Left ventricle myocardium inferior (tissue), 1 donor: ENCODE measurements at regions of chr1 and their contacts with region 1.

Region 1: DNA sequence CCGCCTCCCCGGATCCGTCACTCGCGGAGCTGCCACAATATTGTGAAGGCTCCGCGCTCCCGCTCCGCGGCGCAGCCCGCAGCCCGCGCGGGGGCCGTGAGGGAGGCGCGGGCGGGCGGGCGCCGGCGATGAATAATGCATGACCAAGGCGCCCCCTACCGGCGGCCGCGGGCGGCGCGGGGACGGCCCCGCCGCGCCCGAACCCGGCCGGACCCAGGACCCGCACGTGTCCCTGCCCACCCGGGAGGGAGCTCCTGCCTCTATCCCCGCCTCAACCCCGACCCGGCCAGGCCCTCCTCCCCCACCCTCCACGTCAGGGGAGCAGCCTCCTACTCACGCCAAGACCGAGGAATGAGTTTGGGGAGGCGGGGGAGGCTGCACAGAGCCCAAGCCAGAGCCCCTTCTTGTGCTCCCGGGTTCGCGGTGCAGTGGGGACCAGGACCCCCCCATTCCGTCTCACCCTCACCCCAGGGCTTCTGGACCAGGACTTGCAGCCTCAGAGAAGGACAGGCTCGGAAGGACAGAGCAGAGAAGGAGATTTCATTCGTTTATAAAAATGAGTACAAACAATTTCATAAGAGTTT is 70.8 kb upstream of the CASZ1 start:
- DNase-seq: peak; percentile 53
- H3K4me3 ChIP-seq: peak overlapping the region; percentile 65
- H3K27ac ChIP-seq: no peak overlapping the region
- H3K4me1 ChIP-seq: peaks cover 32% of the 10 kb centered on the region
- H3K27me3 ChIP-seq: peaks cover 89% of the 10 kb centered on the region
- CTCF ChIP-seq: peak; percentile 86

Region 2: DNA sequence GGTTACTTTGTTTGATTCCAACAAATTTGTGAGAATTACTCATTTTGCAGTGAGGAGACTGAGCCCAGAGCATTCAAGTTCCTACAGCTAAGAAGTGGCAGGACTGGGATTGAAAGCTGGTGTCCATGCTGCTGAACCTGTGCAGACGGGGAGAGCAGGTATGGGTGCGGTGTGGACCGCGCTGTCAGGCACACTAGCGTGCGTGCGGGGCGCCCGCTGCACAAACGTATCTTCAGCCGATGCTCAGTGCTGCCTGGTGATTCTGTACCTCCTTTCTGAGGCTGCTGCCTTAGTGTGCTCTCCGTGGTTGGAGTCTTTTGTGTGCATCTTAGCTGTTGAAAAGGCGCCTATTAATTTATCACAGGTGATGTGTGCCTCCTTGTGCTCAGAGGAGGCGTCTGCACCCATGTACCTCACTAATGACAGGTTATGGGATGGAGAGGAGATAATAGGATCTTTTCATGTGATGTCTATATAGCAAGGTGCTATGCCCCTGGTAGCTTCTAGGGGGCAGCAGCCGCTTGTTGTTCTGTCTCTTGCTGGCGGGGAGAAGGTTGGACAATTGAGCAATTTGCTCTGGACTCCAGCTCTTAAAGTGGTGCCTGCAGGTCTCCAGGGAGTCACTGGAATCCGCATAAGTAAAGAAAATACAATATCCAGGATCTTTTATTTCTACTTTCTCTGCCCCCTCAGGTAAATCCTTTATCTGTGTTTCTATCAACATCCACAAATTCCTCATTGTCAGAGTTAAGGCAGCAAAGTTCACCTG is 359.9 kb before region 1 on chr1:
- intact Hi-C with region 1: loop called (anchors 10 kb)
- DNase-seq: peak; percentile 48
- H3K4me3 ChIP-seq: no peak overlapping the region
- H3K27ac ChIP-seq: no peak overlapping the region
- H3K4me1 ChIP-seq: peaks cover 38% of the 10 kb centered on the region
- H3K27me3 ChIP-seq: no peaks in the 10 kb centered on the region
- CTCF ChIP-seq: peak; percentile 85

Region 3: DNA sequence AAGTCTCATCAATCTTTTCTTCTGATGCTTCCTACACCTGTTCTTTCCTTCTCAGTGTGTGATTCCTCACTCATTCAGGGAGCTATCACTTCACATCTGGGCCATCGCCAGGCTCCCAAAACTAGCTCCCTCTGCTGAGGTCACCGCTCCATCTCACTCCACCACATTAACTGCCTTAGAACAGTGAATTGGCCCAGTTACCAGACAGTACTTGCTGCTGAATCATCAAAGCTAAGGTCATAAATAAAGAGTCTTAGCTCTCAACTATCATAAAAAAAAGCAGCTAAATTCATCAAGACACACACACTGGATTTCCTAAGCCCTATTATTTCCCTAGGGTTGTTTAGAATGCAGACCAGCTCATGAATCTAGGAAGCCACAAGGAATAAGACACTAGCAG is 211.4 kb after region 1 on chr1:
- intact Hi-C with region 1: no loop called
- DNase-seq: no peak
- H3K4me3 ChIP-seq: no peak overlapping the region
- H3K27ac ChIP-seq: no peak overlapping the region
- H3K4me1 ChIP-seq: no peaks in the 10 kb centered on the region
- H3K27me3 ChIP-seq: no peaks in the 10 kb centered on the region
- CTCF ChIP-seq: no peak

Region 4: DNA sequence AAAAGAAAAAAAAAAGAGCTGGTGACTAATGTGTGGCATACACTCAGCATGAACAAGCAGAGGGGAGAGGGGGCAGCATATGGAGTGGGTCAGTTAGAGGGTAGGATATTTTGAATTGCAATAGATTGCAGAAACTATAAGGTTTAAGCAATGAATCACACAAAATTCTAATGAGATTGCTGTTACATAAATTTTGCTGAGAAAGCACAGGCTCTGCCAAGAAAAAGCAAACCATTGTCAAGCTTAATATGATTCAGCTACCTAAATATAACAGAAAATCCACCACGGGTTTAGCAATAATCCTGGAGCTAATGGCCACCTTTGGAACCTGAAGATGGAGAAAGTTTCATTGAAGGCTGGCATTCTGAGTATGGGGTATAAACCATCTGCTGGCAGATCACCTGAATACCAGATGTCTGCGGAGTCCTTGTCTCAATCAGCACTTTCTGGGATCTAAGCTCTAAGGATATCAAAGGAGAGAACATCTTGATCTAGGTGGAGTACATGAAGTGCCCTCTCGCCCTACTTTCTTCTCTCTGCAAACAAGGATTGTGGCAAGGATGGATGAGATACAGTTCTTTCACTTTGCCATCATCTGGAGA is 291.6 kb after region 1 on chr1:
- intact Hi-C with region 1: no loop called
- DNase-seq: no peak
- H3K4me3 ChIP-seq: no peak overlapping the region
- H3K27ac ChIP-seq: peak overlapping the region; percentile 71
- H3K4me1 ChIP-seq: peaks cover 27% of the 10 kb centered on the region
- H3K27me3 ChIP-seq: no peaks in the 10 kb centered on the region
- CTCF ChIP-seq: no peak